Activated CD4-positive, alpha-beta T cell treated with anti-CD3 and anti-CD28 coated beads, Interleukin-2, amount 10 ng/mL, durations not matched to agents 24 days and 14 days (primary cell): ENCODE measurements at regions of chr14 and their contacts with region 1.

Region 1: DNA sequence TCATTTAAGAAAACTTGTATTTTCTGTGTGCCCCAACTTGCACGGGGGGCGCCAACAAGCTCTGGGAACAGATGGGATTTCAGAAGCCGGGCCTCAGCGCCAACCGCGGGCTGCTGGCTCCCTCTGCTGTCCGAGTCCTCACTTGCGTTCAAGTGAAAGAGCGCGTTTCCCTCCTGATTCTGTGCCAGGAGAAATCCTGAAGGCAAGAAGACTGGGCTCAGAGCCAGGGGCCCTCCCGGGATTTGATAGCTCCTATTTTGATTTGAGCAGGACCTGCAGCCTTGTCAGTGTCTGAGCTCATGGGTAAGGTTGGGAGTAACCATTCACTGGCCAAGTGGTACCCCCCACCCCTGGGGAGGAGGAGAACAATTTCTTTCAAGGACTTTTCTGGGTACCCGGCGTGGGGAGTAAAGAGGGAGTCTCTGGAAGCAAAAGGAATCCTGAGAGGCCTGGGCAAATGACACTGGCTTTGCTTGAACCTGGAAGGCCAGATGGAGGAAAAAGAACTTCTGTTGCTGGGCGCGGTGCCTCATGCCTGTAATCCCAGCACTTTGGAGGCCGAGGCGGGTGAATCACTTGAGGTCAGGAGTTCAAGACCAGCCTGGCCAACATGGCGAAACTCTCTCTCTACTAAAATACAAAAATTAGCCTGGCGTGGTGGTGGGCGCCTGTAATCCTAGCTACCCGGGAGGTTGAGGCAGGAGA is 179.0 kb upstream of the RGS6 start:
- DNase-seq: peak; percentile 90
- H3K4me3 Mint-ChIP-seq: peak overlapping the region; percentile 35
- H3K27ac Mint-ChIP-seq: no peak overlapping the region
- H3K4me1 Mint-ChIP-seq: peaks cover 9% of the 10 kb centered on the region
- H3K27me3 Mint-ChIP-seq: peaks cover 2% of the 10 kb centered on the region

Region 2: DNA sequence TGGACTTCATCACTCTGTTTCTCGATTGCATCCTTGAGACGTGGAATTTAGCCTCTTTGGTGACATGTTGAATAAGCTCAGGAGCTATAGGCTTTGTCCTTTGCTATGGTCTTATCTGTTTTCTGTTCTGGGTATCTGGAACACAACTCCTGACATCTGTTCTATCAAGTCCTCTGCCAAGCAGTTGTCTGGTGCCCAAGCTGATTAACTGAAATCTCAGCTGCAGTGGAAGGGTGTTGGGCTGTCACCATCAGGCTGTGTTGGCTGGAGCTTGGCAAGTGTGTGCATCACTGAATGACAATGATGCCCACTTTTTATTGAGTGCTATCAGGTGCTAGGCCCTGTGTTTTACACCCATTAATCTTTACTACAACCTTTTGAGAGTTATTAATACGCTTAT is 1796.3 kb before region 1 on chr14:
- intact Hi-C with region 1: no loop called
- DNase-seq: no peak
- H3K4me3 Mint-ChIP-seq: no peak overlapping the region
- H3K27ac Mint-ChIP-seq: no peak overlapping the region
- H3K4me1 Mint-ChIP-seq: no peaks in the 10 kb centered on the region
- H3K27me3 Mint-ChIP-seq: peaks cover 9% of the 10 kb centered on the region

Region 3: GRCh38 chr14:71103662-71104484 is 649.4 kb before region 1 on chr14:
- intact Hi-C with region 1: loop called (anchors 1 kb)
- DNase-seq: peak; percentile 81
- H3K4me3 Mint-ChIP-seq: no peak overlapping the region
- H3K27ac Mint-ChIP-seq: no peak overlapping the region
- H3K4me1 Mint-ChIP-seq: peaks cover 14% of the 10 kb centered on the region
- H3K27me3 Mint-ChIP-seq: no peaks in the 10 kb centered on the region

Region 4: GRCh38 chr14:71855399-71856036 is 102.2 kb after region 1 on chr14:
- intact Hi-C with region 1: loop called (anchors 10 kb)
- DNase-seq: peak; percentile 86
- H3K4me3 Mint-ChIP-seq: no peak overlapping the region
- H3K27ac Mint-ChIP-seq: no peak overlapping the region
- H3K4me1 Mint-ChIP-seq: peaks cover 17% of the 10 kb centered on the region
- H3K27me3 Mint-ChIP-seq: peaks cover 28% of the 10 kb centered on the region